Pancreas (tissue), 10 donors: ENCODE measurements at regions of chrX and their contacts with region 1.

Region 1: DNA sequence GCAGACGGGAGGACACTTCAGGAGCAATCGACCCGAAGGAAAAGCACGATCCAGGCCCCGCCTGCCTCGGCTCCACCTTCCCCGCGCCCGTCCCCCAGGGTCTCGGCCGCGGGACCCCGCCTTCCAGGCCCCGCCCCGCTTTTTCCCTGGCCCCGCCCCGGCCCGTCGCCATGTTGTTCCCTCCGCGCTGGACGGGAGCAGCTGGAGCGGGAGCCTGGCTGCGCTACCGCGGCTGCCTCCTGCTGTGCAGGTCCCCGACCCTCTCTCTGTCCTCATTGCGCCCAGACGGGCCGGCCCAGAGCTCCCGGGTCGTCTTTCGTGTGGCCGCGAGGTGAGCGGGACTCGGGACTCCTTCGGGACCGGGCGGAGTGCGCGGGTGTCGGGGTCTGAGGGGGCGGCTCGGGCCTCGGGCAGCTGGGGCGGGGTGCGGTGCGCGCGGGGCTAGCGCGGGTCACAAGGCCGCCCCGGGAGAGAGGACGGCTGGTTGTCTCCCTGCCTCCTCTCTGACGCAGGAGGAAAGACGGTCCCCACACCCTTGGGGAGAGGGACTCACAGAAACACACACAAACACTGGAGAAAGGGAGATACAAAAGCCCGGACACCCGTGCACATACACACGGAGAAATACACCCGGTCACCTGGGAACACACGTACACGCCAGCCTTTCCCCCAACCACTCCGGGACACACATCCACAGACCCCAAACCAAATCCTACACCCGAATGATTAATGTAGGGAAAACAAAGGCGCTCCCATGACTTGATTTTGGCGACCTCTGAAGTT is at the start of gene RAB9A:
- DNase-seq: peak; percentile 76 to 95 (median 90)
- ATAC-seq: peak; percentile 91 to 96 (median 94)
- H3K4me3 ChIP-seq: peak within 1 kb of the TSS; percentile 66 to 78 (median 70)
- H3K27ac ChIP-seq: peak within 1 kb of the TSS; percentile 90 to 97 (median 94)
- H3K4me1 ChIP-seq: peaks cover 0 to 15% (median 2%) of the 10 kb centered on the region in 3 donors
- H3K27me3 ChIP-seq: peaks cover 0 to 9% (median 0%) of the 10 kb centered on the region in 4 donors
- CTCF ChIP-seq: no peak
- total RNA-seq, gene RAB9A: 11.7 to 22.0 (median 16.5) TPM

Region 2: GRCh38 chrX:13569479-13570260 is 119.5 kb before region 1 on chrX and contains the start of gene EGFL6:
- intact Hi-C with region 1: no loop called
- DNase-seq: peak in 3 of 6 donors; percentile 22 to 66 (median 57)
- ATAC-seq: no peak
- H3K4me3 ChIP-seq: peak within 1 kb of the TSS in 1 of 4 donors; percentile 15
- H3K27ac ChIP-seq: no peak within 1 kb of the TSS
- H3K4me1 ChIP-seq: no peaks in the 10 kb centered on the region
- H3K27me3 ChIP-seq: peaks cover 0 to 35% (median 7%) of the 10 kb centered on the region in 4 donors
- CTCF ChIP-seq: no peak
- total RNA-seq, gene EGFL6: 0.06 to 0.28 (median 0.08) TPM in 4 of 6 donors, not detected in the others

Region 3: GRCh38 chrX:13734278-13735172 is 45.4 kb after region 1 on chrX and contains the starts of genes OFD1 and TRAPPC2:
- intact Hi-C with region 1: loop called in 1 of 3 experiments (anchors 10 kb)
- DNase-seq: peak; percentile 88 to 98 (median 95)
- ATAC-seq: peak; percentile 94 to 97 (median 96)
- H3K4me3 ChIP-seq: peak within 1 kb of the TSS; percentile 51 to 89 (median 70)
- H3K27ac ChIP-seq: peak within 1 kb of the TSS; percentile 81 to 96 (median 92)
- H3K4me1 ChIP-seq: peaks cover 0 to 30% (median 4%) of the 10 kb centered on the region in 3 donors
- H3K27me3 ChIP-seq: no peaks in the 10 kb centered on the region
- CTCF ChIP-seq: no peak
- total RNA-seq, gene OFD1: 13.1 to 32.9 (median 17.6) TPM
- total RNA-seq, gene TRAPPC2: 6.8 to 13.2 (median 9.4) TPM